Activated CD4-positive, alpha-beta memory T cell treated with anti-CD3 and anti-CD28 coated beads for 36 hours (primary cell): ENCODE measurements at regions of chr2 and their contacts with region 1.

Region 1: GRCh38 chr2:191758518-191759507 is 80.9 kb downstream of the NABP1 start:
- DNase-seq: peak; percentile 64
- H3K4me3 Mint-ChIP-seq: no peak overlapping the region
- H3K27ac Mint-ChIP-seq: no peak overlapping the region
- H3K4me1 Mint-ChIP-seq: peaks cover 3% of the 10 kb centered on the region
- H3K27me3 Mint-ChIP-seq: peaks cover 2% of the 10 kb centered on the region

Region 2: DNA sequence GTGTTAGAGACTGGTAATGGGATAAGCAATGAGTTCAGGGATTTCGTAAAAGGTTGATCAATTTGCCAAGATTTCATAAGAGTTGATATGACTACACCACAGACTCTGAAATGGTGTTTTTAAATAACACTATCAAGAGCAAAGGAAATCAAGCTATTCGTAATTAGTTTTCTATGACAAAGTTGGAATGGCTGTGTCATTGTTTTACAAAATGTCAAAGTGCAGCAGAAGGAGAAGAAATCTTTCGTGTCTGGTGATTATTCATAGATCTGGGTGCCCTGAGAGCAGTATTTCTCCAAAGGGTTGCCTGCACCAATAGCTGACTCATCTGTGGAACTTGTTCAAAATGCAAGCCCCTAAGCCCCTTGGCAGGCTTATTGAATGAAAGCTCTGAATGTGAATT is 10.8 kb before region 1 on chr2:
- CTCF ChIA-PET with region 1: interaction called, 10 read pairs
- POLR2A ChIA-PET with region 1: no interaction called
- intact Hi-C with region 1: no loop called
- DNase-seq: no peak
- H3K4me3 Mint-ChIP-seq: no peak overlapping the region
- H3K27ac Mint-ChIP-seq: no peak overlapping the region
- H3K4me1 Mint-ChIP-seq: peaks cover 15% of the 10 kb centered on the region
- H3K27me3 Mint-ChIP-seq: peaks cover 4% of the 10 kb centered on the region

Region 3: DNA sequence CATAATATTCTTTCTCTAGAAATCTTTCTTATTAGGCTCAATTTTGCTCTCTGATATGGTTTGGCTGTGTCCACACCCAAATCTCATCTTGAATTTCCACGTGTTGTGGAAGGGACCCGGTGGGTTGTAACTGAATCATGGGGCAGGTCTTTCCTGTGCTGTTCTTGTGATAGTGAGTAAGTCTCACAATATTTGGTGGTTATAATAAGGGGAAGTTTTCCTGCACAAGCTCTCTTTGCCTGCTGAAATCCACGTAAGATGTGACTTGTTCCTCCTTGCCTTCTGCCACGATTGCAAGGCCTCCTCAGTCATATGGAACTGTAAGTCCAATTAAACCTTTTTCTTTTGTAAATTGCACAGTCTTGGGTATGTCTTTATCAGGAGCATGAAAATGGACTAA is 14.3 kb after region 1 on chr2:
- CTCF ChIA-PET with region 1: interaction called, 10 read pairs
- POLR2A ChIA-PET with region 1: no interaction called
- intact Hi-C with region 1: no loop called
- DNase-seq: no peak
- H3K4me3 Mint-ChIP-seq: no peak overlapping the region
- H3K27ac Mint-ChIP-seq: no peak overlapping the region
- H3K4me1 Mint-ChIP-seq: no peaks in the 10 kb centered on the region
- H3K27me3 Mint-ChIP-seq: no peaks in the 10 kb centered on the region